ENCODE measurements at regions of chr4 and their contacts with region 1.

Region 1: GRCh38 chr4:122914292-122914904 is 8.0 kb downstream of the NUDT6 start:
- DNase-seq: peak; percentile 43
- H3K4me3 Mint-ChIP-seq: no peak overlapping the region
- H3K27ac Mint-ChIP-seq: no peak overlapping the region
- H3K4me1 Mint-ChIP-seq: peaks cover 14% of the 10 kb centered on the region
- H3K27me3 Mint-ChIP-seq: no peaks in the 10 kb centered on the region
- CTCF ChIP-seq: peak; percentile 46

Region 2: DNA sequence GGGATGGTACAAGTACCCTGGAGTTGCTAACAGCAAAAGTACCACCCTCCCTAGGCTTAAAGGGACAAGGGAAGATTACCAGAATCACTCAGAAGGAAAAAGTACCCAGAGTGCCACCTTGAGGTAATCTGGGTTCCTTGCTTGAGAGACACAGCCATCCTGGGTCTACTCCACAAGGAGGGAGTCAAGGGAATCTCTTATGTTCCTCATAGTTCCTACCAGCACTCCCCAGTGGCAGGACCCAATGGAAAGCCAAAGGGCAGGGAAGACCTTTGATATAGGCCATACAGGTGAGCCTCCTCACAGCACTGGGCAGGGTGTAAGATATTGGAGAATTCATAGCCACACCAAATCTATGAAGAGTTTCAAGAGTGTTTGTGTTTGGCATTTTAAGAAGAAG is 463.6 kb before region 1 on chr4:
- CTCF ChIA-PET with region 1: no interaction called
- POLR2A ChIA-PET with region 1: no interaction called
- intact Hi-C with region 1: no loop called
- DNase-seq: peak; percentile 62
- H3K4me3 Mint-ChIP-seq: no peak overlapping the region
- H3K27ac Mint-ChIP-seq: no peak overlapping the region
- H3K4me1 Mint-ChIP-seq: no peaks in the 10 kb centered on the region
- H3K27me3 Mint-ChIP-seq: peaks cover 7% of the 10 kb centered on the region
- CTCF ChIP-seq: peak; percentile 31

Region 3: DNA sequence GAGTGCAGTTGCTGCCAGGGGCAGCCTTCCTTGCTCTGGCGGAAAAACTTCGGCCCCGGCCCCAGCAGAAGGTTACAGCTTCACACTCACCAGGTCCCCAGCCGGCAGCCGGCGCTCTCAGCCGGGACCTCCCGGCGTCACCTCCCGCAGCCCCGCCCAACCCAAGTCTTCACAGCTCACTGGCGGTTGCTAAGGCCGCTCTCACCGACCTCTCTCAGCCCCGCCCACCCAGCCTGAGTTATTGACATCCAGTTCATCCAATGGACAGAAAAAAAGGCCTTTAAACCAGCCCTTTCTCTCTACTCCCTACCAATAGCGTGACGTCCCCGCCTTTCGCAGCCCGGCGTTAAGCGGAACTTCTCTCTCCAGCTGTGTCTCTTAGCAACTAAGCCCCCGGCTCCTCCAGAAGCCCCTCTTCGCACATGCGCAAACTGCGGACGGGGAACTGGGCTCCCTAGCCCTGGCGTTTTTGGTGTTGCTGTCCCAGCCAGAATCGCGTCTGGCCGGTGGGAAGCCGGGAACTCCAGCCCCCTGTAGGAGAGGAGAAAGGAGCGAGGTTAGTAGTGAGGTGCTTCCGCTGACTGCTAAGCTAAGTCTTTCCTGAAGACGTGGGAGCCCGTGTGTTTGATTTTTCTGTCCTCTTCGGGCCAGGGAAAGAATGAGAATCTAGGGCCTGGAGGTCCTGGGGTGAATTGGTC is 181.9 kb before region 1 on chr4 and contains the start of gene BBS12:
- CTCF ChIA-PET with region 1: interaction called, 16 read pairs
- POLR2A ChIA-PET with region 1: interaction called, 4 read pairs
- intact Hi-C with region 1: loop called (anchors 1 kb)
- DNase-seq: peak; percentile 99
- H3K4me3 Mint-ChIP-seq: peak within 1 kb of the TSS; percentile 84
- H3K27ac Mint-ChIP-seq: peak within 1 kb of the TSS; percentile 93
- H3K4me1 Mint-ChIP-seq: peaks cover 4% of the 10 kb centered on the region
- H3K27me3 Mint-ChIP-seq: no peaks in the 10 kb centered on the region
- CTCF ChIP-seq: peak; percentile 8
- total RNA-seq, gene BBS12: 4.7 and 8.3 TPM in 2 replicates

Region 4: GRCh38 chr4:122758033-122758432 is 156.4 kb before region 1 on chr4:
- CTCF ChIA-PET with region 1: interaction called, 134 read pairs
- POLR2A ChIA-PET with region 1: interaction called, 28 read pairs
- intact Hi-C with region 1: loop called (anchors 1 kb)
- DNase-seq: peak; percentile 51
- H3K4me3 Mint-ChIP-seq: no peak overlapping the region
- H3K27ac Mint-ChIP-seq: peak overlapping the region; percentile 56
- H3K4me1 Mint-ChIP-seq: peaks cover 23% of the 10 kb centered on the region
- H3K27me3 Mint-ChIP-seq: no peaks in the 10 kb centered on the region
- CTCF ChIP-seq: peak; percentile 63

Region 5: DNA sequence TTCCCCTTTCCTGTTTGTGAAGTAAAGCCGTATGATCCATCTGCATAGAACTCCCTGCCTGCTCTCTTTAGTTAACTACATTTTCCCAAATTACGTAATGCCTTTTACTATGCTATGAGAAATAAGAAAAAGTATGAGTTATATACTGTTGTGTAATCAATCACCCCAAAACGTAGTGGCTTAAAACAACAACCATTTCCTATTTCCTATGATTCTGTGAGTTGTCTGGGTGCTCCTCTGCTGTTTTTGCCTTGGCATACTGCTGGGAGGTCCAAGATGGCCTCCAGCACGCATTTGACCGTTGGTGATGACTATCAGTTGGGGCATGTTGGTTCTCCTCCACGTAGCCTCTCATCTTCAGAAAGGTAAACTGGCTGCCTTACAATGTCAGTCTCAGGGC is 142.1 kb before region 1 on chr4:
- CTCF ChIA-PET with region 1: interaction called, 10 read pairs
- POLR2A ChIA-PET with region 1: interaction called, 4 read pairs
- intact Hi-C with region 1: no loop called
- DNase-seq: peak; percentile 76
- H3K4me3 Mint-ChIP-seq: no peak overlapping the region
- H3K27ac Mint-ChIP-seq: peak overlapping the region; percentile 61
- H3K4me1 Mint-ChIP-seq: peaks cover 29% of the 10 kb centered on the region
- H3K27me3 Mint-ChIP-seq: no peaks in the 10 kb centered on the region
- CTCF ChIP-seq: no peak

Region 6: DNA sequence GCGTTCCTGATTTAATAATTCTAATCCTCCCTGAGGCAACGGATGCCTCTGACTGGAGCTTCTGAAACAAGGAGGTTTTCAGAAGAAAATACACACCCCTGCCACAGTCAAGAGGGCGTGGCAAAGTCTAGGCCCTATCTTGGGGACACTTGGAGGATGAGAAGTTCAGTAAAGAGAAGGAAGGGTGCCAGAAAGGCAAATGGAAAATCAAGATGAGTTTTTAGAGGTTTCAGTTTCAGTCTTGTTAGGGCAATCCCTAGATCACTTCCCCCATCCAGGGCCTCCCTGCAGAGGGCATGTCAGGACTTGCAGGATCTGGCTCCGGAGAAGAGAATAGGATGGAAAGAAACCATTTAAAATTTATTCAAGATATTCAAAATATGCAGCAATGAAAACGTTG is 116.3 kb before region 1 on chr4:
- CTCF ChIA-PET with region 1: interaction called, 17 read pairs
- POLR2A ChIA-PET with region 1: interaction called, 4 read pairs
- intact Hi-C with region 1: no loop called
- DNase-seq: peak; percentile 90
- H3K4me3 Mint-ChIP-seq: peak overlapping the region; percentile 66
- H3K27ac Mint-ChIP-seq: peak overlapping the region; percentile 98
- H3K4me1 Mint-ChIP-seq: peaks cover 20% of the 10 kb centered on the region
- H3K27me3 Mint-ChIP-seq: no peaks in the 10 kb centered on the region
- CTCF ChIP-seq: no peak

Region 7: DNA sequence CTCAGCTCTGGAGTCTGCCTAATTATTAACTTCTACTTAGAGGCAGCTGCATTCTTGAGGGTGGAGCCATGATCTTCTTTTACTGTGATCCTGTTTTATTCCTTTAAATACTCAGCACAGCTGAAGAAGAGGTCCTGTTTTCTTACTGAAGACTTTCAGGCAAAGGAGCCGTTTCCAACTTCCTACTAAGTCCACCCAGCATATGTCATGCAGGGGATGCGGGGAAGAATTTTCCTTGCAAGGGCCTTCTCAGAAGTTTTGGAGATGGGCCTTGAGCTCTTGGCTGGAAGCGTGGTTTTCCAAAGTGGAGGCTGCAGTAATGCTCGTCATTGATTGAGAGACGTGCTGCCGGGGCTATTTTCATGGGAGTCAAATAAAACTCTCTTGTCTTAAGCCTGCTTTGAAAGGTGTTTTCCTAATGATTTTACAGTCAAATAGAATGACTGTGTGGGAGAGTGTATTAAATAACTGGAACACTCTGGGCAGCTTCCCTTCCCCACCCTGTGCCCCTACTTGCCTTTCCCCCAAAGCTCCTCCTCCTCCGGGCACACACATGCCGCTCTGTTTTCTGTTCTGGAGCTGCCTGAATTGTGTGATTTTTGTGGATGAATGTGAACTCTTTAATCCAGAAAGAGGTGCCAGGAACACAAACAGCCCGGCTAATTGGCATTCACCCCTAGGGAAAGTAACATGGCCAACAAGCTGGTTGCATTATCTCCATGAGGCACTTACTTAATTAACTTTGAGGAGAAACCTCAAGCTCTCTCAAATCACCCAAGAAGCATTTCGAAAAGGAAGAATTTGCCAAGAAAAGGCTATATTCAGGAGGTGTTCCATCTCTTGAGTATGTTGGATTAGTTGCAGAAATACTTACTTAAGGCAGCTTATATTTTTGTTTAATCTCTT is 59.7 kb before region 1 on chr4:
- CTCF ChIA-PET with region 1: interaction called, 10 read pairs
- POLR2A ChIA-PET with region 1: no interaction called
- intact Hi-C with region 1: no loop called
- DNase-seq: no peak
- H3K4me3 Mint-ChIP-seq: peak overlapping the region; percentile 67
- H3K27ac Mint-ChIP-seq: peak overlapping the region; percentile 98
- H3K4me1 Mint-ChIP-seq: peaks cover 22% of the 10 kb centered on the region
- H3K27me3 Mint-ChIP-seq: no peaks in the 10 kb centered on the region
- CTCF ChIP-seq: no peak

Region 8: DNA sequence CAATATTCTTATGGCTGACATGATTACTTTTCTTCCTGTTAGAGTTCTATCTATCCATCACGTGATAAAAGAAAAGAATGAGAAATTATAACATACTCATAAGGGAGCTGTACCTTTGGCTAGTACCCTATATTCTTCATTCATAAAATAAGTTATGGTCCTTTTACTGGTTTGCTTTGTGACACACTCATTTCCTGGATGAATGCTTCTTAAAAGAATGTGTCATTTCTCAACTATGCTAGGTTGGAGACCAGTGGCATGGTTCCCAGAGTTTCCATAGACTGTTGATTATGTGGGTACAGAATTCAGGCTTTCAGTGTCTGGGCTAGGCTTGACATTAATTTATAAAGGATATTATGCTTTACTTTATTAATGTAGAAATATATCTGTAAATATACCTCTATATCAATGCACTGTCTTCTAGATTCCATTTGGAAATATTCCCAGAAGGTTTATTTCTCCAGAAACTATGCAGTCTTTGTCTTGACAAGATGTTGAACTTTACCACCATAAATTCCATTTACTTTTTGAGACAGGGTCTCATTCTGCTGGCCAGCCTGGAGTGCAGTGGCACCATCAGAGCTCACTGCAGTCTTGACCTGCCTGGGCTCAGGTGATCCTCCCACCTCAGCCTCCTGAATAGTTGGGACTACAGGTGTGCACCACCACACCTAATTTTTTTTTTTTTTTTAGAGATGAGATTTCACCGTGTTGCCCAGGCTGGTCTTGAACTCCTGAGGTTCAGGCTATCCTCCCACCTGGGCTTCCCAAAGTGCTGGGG is 15.8 kb before region 1 on chr4:
- CTCF ChIA-PET with region 1: interaction called, 49 read pairs
- POLR2A ChIA-PET with region 1: interaction called, 9 read pairs
- intact Hi-C with region 1: no loop called
- DNase-seq: peak; percentile 90
- H3K4me3 Mint-ChIP-seq: no peak overlapping the region
- H3K27ac Mint-ChIP-seq: peak overlapping the region; percentile 57
- H3K4me1 Mint-ChIP-seq: peaks cover 21% of the 10 kb centered on the region
- H3K27me3 Mint-ChIP-seq: no peaks in the 10 kb centered on the region
- CTCF ChIP-seq: no peak